ENCODE measurements at regions of chr3 and their contacts with region 1.

Region 1: DNA sequence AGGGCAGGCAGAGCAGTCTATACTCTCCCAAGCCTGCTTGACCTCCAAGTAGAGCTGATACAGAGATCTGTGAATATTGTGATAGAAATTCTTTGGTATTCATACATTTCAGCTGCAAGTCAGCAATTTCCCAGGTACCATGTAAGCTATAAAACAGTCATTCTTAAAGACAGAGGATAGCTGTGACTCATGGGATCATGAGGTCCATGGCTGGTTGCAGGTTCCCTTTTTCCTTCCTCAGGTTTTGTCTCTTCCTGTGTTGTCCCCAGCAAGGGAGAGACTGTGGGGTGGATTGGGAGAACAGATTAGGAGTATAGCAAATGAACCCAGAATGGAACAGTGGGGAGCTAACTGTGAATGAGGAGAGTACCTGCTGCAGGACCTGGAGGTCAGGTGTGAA is 5.4 kb upstream of the P4HTM start:
- DNase-seq: no peak
- H3K4me3 Mint-ChIP-seq: no peak overlapping the region
- H3K27ac Mint-ChIP-seq: peak overlapping the region; percentile 54
- H3K4me1 Mint-ChIP-seq: peaks cover 16% of the 10 kb centered on the region
- H3K27me3 Mint-ChIP-seq: no peaks in the 10 kb centered on the region

Region 2: GRCh38 chr3:48564017-48564416 is 420.6 kb before region 1 on chr3:
- CTCF ChIA-PET with region 1: no interaction called
- POLR2A ChIA-PET with region 1: no interaction called
- DNase-seq: peak; percentile 49
- H3K4me3 Mint-ChIP-seq: no peak overlapping the region
- H3K27ac Mint-ChIP-seq: no peak overlapping the region
- H3K4me1 Mint-ChIP-seq: peaks cover 36% of the 10 kb centered on the region
- H3K27me3 Mint-ChIP-seq: no peaks in the 10 kb centered on the region

Region 3: GRCh38 chr3:48974076-48974864 is 10.4 kb before region 1 on chr3:
- CTCF ChIA-PET with region 1: interaction called, 5 read pairs
- POLR2A ChIA-PET with region 1: interaction called, 10 read pairs
- DNase-seq: no peak
- H3K4me3 Mint-ChIP-seq: no peak overlapping the region
- H3K27ac Mint-ChIP-seq: peak overlapping the region; percentile 76
- H3K4me1 Mint-ChIP-seq: peaks cover 10% of the 10 kb centered on the region
- H3K27me3 Mint-ChIP-seq: no peaks in the 10 kb centered on the region